ENCODE measurements at regions of chr6 and their contacts with region 1.

Region 1: DNA sequence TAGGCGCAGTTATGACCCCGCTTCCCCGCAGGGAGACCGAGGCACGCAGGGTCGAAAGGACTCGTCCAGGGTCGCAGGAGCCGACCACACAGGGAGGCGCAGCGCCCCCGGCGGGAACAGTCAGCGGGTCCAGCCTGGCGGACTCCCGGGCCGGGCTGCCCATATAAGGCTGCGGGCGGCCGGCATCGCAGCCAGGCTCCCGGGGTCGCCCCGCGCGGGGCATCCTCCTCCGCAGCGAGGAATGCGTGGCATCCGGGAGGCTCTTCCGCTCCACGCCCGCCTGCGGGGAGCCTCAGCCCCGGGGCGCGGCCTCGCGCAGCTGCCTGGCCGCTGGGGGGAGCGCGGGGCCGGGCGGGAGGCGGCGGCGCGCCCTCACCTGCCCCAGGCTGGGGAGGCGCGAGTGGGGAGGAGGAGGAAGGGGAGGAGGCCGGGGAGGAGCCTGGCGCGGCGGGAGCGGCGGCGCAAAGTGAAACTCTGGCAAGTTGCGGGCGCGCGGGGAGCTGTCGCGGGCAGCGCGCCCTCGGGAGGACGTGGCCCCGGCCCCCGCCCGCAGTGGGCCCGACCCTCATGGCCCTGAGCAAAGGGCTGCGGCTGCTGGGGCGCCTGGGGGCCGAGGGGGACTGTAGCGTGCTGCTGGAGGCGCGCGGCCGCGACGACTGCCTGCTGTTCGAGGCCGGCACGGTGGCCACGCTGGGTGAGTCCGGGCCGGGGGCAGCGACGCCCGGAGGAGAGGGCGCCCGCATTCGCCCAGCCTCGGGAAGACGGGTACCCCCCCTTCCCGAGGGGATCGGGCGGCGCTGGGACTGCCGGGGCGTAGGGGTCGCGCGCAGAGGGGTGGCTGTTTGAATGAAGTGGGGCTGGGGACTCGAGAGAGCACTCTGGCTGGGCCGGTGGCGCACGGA is at the start of gene SYNJ2:
- DNase-seq: peak; percentile 73 to 89 (median 87)
- ATAC-seq: peak; percentile 96
- H3K4me3 ChIP-seq: peak within 1 kb of the TSS; percentile 81
- H3K4me3 Mint-ChIP-seq: peak within 1 kb of the TSS; percentile 75 to 94 (median 84)
- H3K27ac ChIP-seq: peak within 1 kb of the TSS; percentile 83
- H3K27ac Mint-ChIP-seq: peak within 1 kb of the TSS; percentile 78 to 95 (median 88)
- H3K4me1 ChIP-seq: peaks cover 27 to 38% of the 10 kb centered on the region in 2 donors
- H3K4me1 Mint-ChIP-seq: peaks cover 26 to 65% (median 55%) of the 10 kb centered on the region in 7 donors
- H3K27me3 ChIP-seq: no peaks in the 10 kb centered on the region
- H3K27me3 Mint-ChIP-seq: no peaks in the 10 kb centered on the region
- total RNA-seq, gene SYNJ2: 22.4 to 36.6 (median 22.5) TPM

Region 2: DNA sequence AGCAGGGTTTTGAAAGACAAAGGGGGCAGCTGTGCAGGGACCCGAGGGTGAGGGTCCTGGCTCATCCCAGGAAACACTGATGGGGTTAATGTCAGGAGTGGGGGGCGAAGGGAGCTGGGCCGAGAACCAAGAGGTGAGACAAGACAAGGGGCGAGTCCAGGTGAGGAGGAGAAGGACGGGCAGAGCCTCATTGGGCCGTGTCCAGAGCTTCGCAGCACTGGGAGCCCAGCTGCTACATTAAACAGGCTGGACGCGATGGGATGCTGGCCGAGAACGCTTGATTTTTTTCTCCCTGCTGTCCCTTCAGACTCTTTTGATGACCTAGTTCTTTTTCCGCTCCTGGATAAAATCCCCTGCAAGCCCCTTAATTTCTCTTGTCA is 331.4 kb before region 1 on chr6:
- CTCF ChIA-PET with region 1: no interaction called
- POLR2A ChIA-PET with region 1: no interaction called
- intact Hi-C with region 1: no loop called
- DNase-seq: no peak
- ATAC-seq: no peak
- H3K4me3 ChIP-seq: no peak overlapping the region
- H3K4me3 Mint-ChIP-seq: no peak overlapping the region
- H3K27ac ChIP-seq: no peak overlapping the region
- H3K27ac Mint-ChIP-seq: no peak overlapping the region
- H3K4me1 ChIP-seq: no peaks in the 10 kb centered on the region
- H3K4me1 Mint-ChIP-seq: peaks cover 5 to 29% (median 10%) of the 10 kb centered on the region in 7 donors
- H3K27me3 ChIP-seq: no peaks in the 10 kb centered on the region
- H3K27me3 Mint-ChIP-seq: no peaks in the 10 kb centered on the region

Region 3: GRCh38 chr6:157823001-157823527 is 158.6 kb before region 1 on chr6 and contains the start of gene SNX9:
- CTCF ChIA-PET with region 1: no interaction called
- POLR2A ChIA-PET with region 1: no interaction called
- intact Hi-C with region 1: loop called in 1 of 2 experiments (anchors 5 kb)
- DNase-seq: peak in 8 of 9 donors; percentile 27 to 74 (median 56)
- ATAC-seq: peak; percentile 77
- H3K4me3 ChIP-seq: peak within 1 kb of the TSS; percentile 60
- H3K4me3 Mint-ChIP-seq: peak within 1 kb of the TSS; percentile 88 to 100 (median 96)
- H3K27ac ChIP-seq: peak within 1 kb of the TSS; percentile 96
- H3K27ac Mint-ChIP-seq: peak within 1 kb of the TSS; percentile 95 to 100 (median 99)
- H3K4me1 ChIP-seq: peaks cover 9 to 16% of the 10 kb centered on the region in 2 donors
- H3K4me1 Mint-ChIP-seq: peaks cover 15 to 70% (median 57%) of the 10 kb centered on the region in 7 donors
- H3K27me3 ChIP-seq: no peaks in the 10 kb centered on the region
- H3K27me3 Mint-ChIP-seq: peaks cover 0 to 42% (median 0%) of the 10 kb centered on the region in 5 donors
- total RNA-seq, gene SNX9: 13.4 to 39.2 (median 36.4) TPM

Region 4: GRCh38 chr6:157898169-157898568 is 83.5 kb before region 1 on chr6:
- CTCF ChIA-PET with region 1: no interaction called
- POLR2A ChIA-PET with region 1: no interaction called
- intact Hi-C with region 1: loop called in 1 of 2 experiments (anchors 2 kb)
- DNase-seq: peak in 7 of 9 donors; percentile 39 to 68 (median 48)
- ATAC-seq: peak; percentile 55
- H3K4me3 ChIP-seq: no peak overlapping the region
- H3K4me3 Mint-ChIP-seq: no peak overlapping the region
- H3K27ac ChIP-seq: no peak overlapping the region
- H3K27ac Mint-ChIP-seq: peak overlapping the region in 8 of 9 donors; percentile 6 to 92 (median 50)
- H3K4me1 ChIP-seq: peaks cover 0 to 12% of the 10 kb centered on the region in 2 donors
- H3K4me1 Mint-ChIP-seq: peaks cover 5 to 40% (median 26%) of the 10 kb centered on the region in 7 donors
- H3K27me3 ChIP-seq: no peaks in the 10 kb centered on the region
- H3K27me3 Mint-ChIP-seq: no peaks in the 10 kb centered on the region

Region 5: GRCh38 chr6:157962601-157963302 is 18.9 kb before region 1 on chr6:
- CTCF ChIA-PET with region 1: interaction called, 4 read pairs
- POLR2A ChIA-PET with region 1: interaction called, 3 read pairs
- intact Hi-C with region 1: loop called (anchors 1 to 2 kb)
- DNase-seq: peak in 4 of 9 donors; percentile 26 to 50 (median 41)
- ATAC-seq: peak; percentile 31
- H3K4me3 ChIP-seq: peak overlapping the region; percentile 14
- H3K4me3 Mint-ChIP-seq: peak overlapping the region; percentile 51 to 84 (median 72)
- H3K27ac ChIP-seq: peak overlapping the region; percentile 25
- H3K27ac Mint-ChIP-seq: peak overlapping the region; percentile 77 to 97 (median 89)
- H3K4me1 ChIP-seq: peaks cover 0 to 14% of the 10 kb centered on the region in 2 donors
- H3K4me1 Mint-ChIP-seq: peaks cover 8 to 32% (median 28%) of the 10 kb centered on the region in 7 donors
- H3K27me3 ChIP-seq: no peaks in the 10 kb centered on the region
- H3K27me3 Mint-ChIP-seq: no peaks in the 10 kb centered on the region

Region 6: DNA sequence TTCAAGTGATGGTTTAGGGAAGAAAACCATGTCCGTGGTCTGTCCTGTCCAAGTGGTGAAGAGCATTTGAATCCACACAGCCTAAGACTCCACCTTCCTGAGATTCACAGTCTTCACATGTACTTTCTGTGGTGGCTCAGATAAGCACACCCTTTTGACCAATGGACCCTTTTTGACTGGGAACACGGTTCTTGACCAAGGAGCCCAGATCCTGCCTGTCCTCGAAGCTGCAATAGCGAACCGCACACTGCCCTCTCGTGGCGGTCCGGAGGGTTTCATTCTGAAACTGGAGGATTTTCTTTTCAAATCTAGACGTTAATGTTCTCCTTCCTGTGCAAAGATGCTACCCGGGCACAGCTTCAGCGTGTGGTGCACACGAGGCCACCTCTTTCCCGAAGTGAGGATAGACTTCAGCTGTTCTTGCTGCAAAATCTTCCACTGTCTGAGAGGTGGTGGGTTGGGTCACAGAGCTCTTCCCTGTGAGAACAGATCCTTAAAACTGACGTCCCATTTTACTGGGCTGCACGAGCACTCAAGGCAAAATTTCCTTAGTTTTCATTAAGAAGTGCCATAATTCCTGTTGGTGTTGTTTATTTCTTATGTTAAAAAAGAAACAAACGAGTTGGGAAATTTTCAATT is 90.6 kb after region 1 on chr6:
- CTCF ChIA-PET with region 1: interaction called, 7 read pairs
- POLR2A ChIA-PET with region 1: interaction called, 4 read pairs
- intact Hi-C with region 1: loop called (anchors 1 kb)
- DNase-seq: peak; percentile 28 to 69 (median 65)
- ATAC-seq: peak; percentile 85
- H3K4me3 ChIP-seq: no peak overlapping the region
- H3K4me3 Mint-ChIP-seq: no peak overlapping the region
- H3K27ac ChIP-seq: no peak overlapping the region
- H3K27ac Mint-ChIP-seq: peak overlapping the region; percentile 32 to 91 (median 55)
- H3K4me1 ChIP-seq: peaks cover 0 to 5% of the 10 kb centered on the region in 2 donors
- H3K4me1 Mint-ChIP-seq: peaks cover 5 to 31% (median 6%) of the 10 kb centered on the region in 7 donors
- H3K27me3 ChIP-seq: no peaks in the 10 kb centered on the region
- H3K27me3 Mint-ChIP-seq: no peaks in the 10 kb centered on the region

Region 7: GRCh38 chr6:158207422-158207788 is 225.8 kb after region 1 on chr6:
- CTCF ChIA-PET with region 1: no interaction called
- POLR2A ChIA-PET with region 1: no interaction called
- intact Hi-C with region 1: loop called in 1 of 2 experiments (anchors 10 kb)
- DNase-seq: peak in 4 of 9 donors; percentile 9 to 42 (median 18)
- ATAC-seq: peak; percentile 54
- H3K4me3 ChIP-seq: no peak overlapping the region
- H3K4me3 Mint-ChIP-seq: peak overlapping the region in 7 of 10 donors; percentile 2 to 66 (median 22)
- H3K27ac ChIP-seq: no peak overlapping the region
- H3K27ac Mint-ChIP-seq: peak overlapping the region in 7 of 9 donors; percentile 4 to 90 (median 25)
- H3K4me1 ChIP-seq: no peaks in the 10 kb centered on the region
- H3K4me1 Mint-ChIP-seq: peaks cover 6 to 47% (median 13%) of the 10 kb centered on the region in 7 donors
- H3K27me3 ChIP-seq: no peaks in the 10 kb centered on the region
- H3K27me3 Mint-ChIP-seq: peaks cover 0 to 10% (median 4%) of the 10 kb centered on the region in 5 donors